ENCODE measurements at regions of chr1 and their contacts with region 1.

Region 1: DNA sequence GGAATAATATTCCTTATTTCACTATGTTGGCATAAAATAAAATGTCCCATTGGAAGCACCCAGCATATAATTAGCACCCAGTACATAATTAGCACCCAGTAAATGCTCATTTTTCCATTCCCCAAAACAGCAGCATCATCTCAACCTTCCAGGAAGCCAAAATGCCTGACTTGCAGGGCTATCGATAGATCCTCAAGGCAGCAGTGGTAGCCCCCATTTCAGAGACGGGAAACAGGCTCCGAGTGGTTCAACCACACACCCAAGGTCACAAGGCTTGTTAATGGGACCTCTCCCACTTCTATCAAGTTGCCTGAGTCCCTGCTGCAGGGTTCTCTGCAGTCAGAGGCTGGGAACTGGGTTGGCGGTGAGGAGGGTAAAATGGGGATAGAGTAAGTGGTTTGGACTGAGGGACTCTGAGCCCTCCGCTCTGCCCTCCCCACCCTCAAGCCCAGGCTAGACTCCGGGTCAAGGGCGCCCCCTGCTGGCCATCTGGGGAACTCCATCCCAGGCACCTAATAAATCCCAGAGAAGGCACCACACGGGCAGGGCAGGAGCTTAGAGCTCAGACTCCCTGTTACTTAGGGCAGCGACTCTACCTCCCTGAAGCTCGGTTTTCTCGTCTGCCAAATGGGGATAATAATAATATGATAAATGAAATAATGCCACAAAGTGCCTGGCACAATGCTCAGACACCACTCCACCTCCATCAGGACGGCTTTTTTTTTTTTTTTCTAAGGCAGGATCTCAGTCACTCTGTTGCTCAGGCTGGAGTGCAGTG is 21.9 kb upstream of the LAPTM5 start:
- DNase-seq: peak; percentile 66 to 94
- H3K4me3 ChIP-seq: no peak overlapping the region
- H3K4me1 ChIP-seq: peaks cover 8% of the 10 kb centered on the region
- H3K27me3 ChIP-seq: no peaks in the 10 kb centered on the region

Region 2: DNA sequence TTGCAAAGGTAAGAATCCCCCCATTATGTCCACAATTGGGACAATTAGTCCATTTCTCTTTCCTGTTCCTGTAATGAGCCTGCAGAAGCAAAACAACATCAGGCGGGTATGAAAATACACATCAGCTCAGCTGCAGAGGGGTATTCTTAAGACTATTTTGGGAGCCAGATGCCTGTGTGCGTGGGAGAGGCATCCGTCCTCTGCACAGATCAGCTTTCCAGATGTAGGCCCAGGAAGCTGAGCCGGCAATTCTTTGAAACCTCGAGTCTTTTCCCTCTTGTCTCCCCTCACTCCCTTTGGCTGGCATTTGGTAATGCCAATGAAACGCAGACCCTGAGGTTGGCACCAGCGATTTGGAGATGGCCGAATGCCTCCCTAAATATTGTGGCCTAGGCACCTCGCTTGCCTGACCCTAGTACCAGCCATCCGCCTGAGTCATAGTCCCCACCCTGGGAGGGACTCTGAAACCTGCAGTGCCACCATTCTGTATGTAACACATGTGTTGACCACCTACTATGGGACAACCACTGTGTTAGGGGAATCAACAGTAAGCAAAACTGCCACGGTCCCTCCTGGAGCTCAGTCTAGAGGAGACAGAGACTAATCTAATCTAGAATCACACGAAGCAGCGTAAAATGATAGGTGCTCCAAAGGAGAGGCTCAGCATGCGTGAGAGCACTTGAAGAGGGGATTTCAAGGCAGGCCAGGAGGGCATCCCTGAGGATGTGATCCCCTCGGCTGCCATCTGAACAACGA is 659.1 kb before region 1 on chr1:
- in situ Hi-C with region 1: no loop called
- DNase-seq: no peak
- H3K4me3 ChIP-seq: no peak overlapping the region
- H3K4me1 ChIP-seq: no peaks in the 10 kb centered on the region
- H3K27me3 ChIP-seq: no peaks in the 10 kb centered on the region

Region 3: DNA sequence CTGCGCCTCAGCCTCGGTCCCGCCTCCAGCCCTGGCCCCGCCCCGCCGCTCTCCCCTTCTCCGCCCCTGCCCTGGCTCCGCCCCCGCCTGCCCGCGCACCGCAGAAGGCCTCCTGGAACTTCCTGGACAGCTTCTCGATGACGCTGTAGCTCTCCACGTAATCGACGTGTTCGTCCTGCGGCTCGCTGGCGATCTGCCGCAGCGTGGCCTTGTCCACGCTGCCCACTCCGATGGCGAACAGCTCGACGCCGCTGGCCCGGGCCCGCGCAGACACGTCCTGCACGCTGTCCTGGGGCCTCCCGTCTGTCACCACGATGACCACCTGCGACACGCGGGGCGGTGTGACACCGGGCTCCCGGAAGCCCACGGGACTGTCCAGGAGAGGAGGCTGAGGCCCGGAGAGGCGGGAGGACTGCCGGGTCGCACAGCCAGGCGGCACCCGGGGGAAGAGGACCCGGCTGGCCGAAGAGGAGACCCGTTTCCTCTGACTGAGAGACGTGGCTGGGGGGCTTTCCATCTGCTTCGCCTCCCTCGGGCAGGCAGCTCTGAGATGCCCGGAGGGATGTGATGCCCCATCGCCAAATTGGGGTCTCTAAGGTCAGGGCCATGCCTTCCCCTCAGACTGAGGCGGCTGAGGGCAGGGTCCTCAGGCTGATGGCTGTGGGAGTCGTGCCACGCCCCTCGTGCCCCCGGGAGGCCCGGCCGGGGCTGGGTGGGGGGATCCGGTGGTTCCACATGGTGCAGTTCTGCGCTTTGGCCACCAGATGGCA is 60.7 kb before region 1 on chr1:
- in situ Hi-C with region 1: loop called (anchors 5 kb)
- DNase-seq: peak; percentile 88 to 89
- H3K4me3 ChIP-seq: peak overlapping the region; percentile 49
- H3K4me1 ChIP-seq: 0 out of 2 replicates have a peak, but pooled peaks cover 2% of the 10 kb centered on the region
- H3K27me3 ChIP-seq: no peaks in the 10 kb centered on the region

Region 4: GRCh38 chr1:30929135-30929889 is 149.8 kb after region 1 on chr1:
- in situ Hi-C with region 1: no loop called
- DNase-seq: peak; percentile 54 to 77
- H3K4me3 ChIP-seq: no peak overlapping the region
- H3K4me1 ChIP-seq: peaks cover 10% of the 10 kb centered on the region
- H3K27me3 ChIP-seq: no peaks in the 10 kb centered on the region